ENCODE measurements at regions of chr2 and their contacts with region 1.

Region 1: GRCh38 chr2:26577434-26578112 is 63.6 kb downstream of the CIB4 start:
- DNase-seq: peak; percentile 59
- H3K4me3 ChIP-seq: no peak overlapping the region
- H3K27ac ChIP-seq: no peak overlapping the region
- H3K4me1 ChIP-seq: no peaks in the 10 kb centered on the region
- H3K27me3 ChIP-seq: peaks cover 0 to 7% of the 10 kb centered on the region in 2 experiments
- CTCF ChIP-seq: peak; percentile 95 to 98
- POLR2A ChIP-seq: no peak

Region 2: GRCh38 chr2:26469092-26469710 is 108.4 kb before region 1 on chr2:
- CTCF ChIA-PET with region 1: interaction called, 22 read pairs
- POLR2A ChIA-PET with region 1: no interaction called
- dilution Hi-C with region 1: no loop called
- intact Hi-C with region 1: loop called (anchors 1 kb)
- DNase-seq: peak; percentile 61
- H3K4me3 ChIP-seq: no peak overlapping the region
- H3K27ac ChIP-seq: no peak overlapping the region
- H3K4me1 ChIP-seq: no peaks in the 10 kb centered on the region
- H3K27me3 ChIP-seq: no peaks in the 10 kb centered on the region
- CTCF ChIP-seq: peak; percentile 62 to 79
- POLR2A ChIP-seq: no peak

Region 3: GRCh38 chr2:26521054-26521912 is 56.3 kb before region 1 on chr2:
- CTCF ChIA-PET with region 1: interaction called, 14 read pairs
- POLR2A ChIA-PET with region 1: no interaction called
- dilution Hi-C with region 1: no loop called
- intact Hi-C with region 1: no loop called
- DNase-seq: no peak
- H3K4me3 ChIP-seq: no peak overlapping the region
- H3K27ac ChIP-seq: no peak overlapping the region
- H3K4me1 ChIP-seq: no peaks in the 10 kb centered on the region
- H3K27me3 ChIP-seq: peaks cover 3 to 10% of the 10 kb centered on the region in 2 experiments
- CTCF ChIP-seq: peak; percentile 16 to 28
- POLR2A ChIP-seq: no peak

Region 4: GRCh38 chr2:26542676-26543505 is 34.7 kb before region 1 on chr2:
- CTCF ChIA-PET with region 1: interaction called, 12 read pairs
- POLR2A ChIA-PET with region 1: no interaction called
- dilution Hi-C with region 1: no loop called
- intact Hi-C with region 1: no loop called
- DNase-seq: no peak
- H3K4me3 ChIP-seq: no peak overlapping the region
- H3K27ac ChIP-seq: no peak overlapping the region
- H3K4me1 ChIP-seq: no peaks in the 10 kb centered on the region
- H3K27me3 ChIP-seq: peaks cover 5 to 6% of the 10 kb centered on the region in 2 experiments
- CTCF ChIP-seq: no peak
- POLR2A ChIP-seq: no peak

Region 5: GRCh38 chr2:26591619-26592505 is 14.3 kb after region 1 on chr2:
- CTCF ChIA-PET with region 1: interaction called, 32 read pairs
- POLR2A ChIA-PET with region 1: no interaction called
- dilution Hi-C with region 1: no loop called
- intact Hi-C with region 1: no loop called
- DNase-seq: no peak
- H3K4me3 ChIP-seq: no peak overlapping the region
- H3K27ac ChIP-seq: no peak overlapping the region
- H3K4me1 ChIP-seq: peaks cover 6% of the 10 kb centered on the region
- H3K27me3 ChIP-seq: peaks cover 22 to 28% of the 10 kb centered on the region in 2 experiments
- CTCF ChIP-seq: no peak
- POLR2A ChIP-seq: no peak